Activated CD8-positive, alpha-beta memory T cell treated with anti-CD3 and anti-CD28 coated beads, Interleukin-2, amount 10 ng/mL, durations not matched to agents 7 days and 5 days (primary cell): ENCODE measurements at regions of chr1 and their contacts with region 1.

Region 1: DNA sequence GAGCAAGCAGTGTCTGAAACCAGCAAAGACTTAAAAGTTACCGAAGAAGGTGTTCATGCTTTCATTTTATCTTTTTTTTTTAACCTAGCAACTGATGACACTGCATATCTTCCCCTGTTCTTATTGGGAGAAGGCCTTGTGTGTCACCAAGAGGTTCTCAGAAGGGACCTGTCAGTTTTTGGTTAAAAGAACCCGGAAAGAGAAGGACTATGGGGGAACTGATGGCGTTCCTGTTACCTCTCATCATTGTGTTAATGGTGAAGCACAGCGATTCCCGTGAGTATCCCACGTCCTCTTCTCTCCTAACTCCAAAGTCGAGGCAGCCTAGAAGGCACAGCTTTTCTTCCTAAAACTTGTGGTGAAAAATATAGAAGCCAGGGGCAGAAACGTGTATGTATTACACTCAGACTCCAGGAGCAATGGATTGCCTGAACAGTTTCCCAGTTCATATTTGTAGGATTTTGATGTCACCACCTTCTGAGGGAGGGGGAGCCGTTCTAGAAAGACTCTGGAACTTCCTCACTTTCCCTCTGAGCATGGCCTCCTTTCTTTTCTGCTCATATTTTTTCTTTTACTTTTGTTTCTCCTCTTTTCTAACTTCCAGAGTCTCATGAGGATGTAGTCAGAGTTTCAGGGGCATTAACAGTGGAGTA is at the start of gene MR1:
- DNase-seq: peak; percentile 60
- ATAC-seq: peak; percentile 98
- H3K4me3 Mint-ChIP-seq: peak within 1 kb of the TSS; percentile 92
- H3K27ac Mint-ChIP-seq: peak within 1 kb of the TSS; percentile 98
- H3K4me1 Mint-ChIP-seq: peaks cover 55% of the 10 kb centered on the region
- H3K27me3 Mint-ChIP-seq: no peaks in the 10 kb centered on the region
- total RNA-seq, gene MR1: 38.7 to 41.2 TPM

Region 2: GRCh38 chr1:180981596-180982387 is 52.1 kb before region 1 on chr1:
- CTCF ChIA-PET with region 1: no interaction called
- DNase-seq: peak; percentile 75
- ATAC-seq: peak; percentile 87
- H3K4me3 Mint-ChIP-seq: peak overlapping the region; percentile 10
- H3K27ac Mint-ChIP-seq: peak overlapping the region; percentile 65
- H3K4me1 Mint-ChIP-seq: peaks cover 19% of the 10 kb centered on the region
- H3K27me3 Mint-ChIP-seq: no peaks in the 10 kb centered on the region

Region 3: DNA sequence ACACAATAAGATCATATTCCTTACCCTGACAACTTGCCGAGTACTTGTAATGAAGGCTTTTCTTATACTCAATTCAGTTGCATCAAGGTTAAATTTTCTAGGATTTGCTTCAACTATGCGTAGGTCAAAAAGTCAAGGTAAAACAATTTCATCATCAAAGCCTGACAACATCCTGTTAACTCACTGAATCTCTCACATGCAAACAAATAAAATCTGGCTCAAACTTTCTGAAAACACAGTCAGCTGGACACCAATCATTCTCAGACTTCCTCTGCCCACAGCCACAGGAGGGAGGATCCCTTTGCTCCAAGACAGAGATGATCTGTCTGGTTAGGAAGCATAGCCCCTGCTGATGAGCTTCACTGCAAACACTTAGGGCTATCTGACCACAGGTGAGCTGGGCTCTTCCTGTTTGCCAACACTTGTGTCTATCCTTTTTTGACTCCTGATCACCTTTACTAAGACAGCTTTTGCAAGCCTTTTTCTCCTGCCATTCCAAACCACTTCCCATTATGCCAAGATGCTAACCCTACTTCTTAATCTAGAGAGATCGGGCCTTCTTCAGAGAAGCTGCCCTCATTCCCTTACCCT is 31.2 kb before region 1 on chr1:
- CTCF ChIA-PET with region 1: no interaction called
- DNase-seq: no peak
- ATAC-seq: no peak
- H3K4me3 Mint-ChIP-seq: no peak overlapping the region
- H3K27ac Mint-ChIP-seq: no peak overlapping the region
- H3K4me1 Mint-ChIP-seq: peaks cover 6% of the 10 kb centered on the region
- H3K27me3 Mint-ChIP-seq: no peaks in the 10 kb centered on the region

Region 4: DNA sequence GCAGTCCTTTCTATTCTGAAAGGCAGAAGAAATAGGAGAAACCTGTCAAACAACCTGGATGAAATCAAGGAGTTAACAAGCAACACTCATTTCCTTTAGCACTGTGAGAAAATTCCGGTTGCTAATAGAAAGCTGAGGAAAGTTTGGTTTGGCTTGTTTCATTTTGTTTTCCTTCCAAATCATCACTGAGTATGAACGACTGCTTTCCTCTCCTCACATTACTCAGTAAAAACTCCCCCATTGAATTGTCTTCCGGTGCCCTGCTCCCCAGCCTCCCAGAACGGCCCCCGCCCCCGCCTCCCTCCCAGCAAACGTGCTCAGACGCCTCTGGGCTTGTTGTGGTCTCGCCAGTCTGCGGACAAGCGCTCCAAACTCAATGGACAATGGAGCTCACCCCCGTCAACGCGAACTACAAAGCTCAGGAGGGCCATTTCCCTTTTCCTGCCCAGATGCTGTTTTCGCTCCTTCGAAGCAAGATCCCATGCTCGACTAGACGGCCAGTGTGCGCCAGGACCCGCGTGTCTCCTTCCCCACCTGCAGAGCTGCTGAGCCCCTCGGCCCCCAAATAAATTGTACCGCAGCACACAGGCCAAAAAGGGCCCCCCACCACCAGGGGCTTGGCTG is 12.0 kb before region 1 on chr1:
- CTCF ChIA-PET with region 1: interaction called, 12 read pairs
- DNase-seq: peak; percentile 80
- ATAC-seq: peak; percentile 48
- H3K4me3 Mint-ChIP-seq: peak overlapping the region; percentile 94
- H3K27ac Mint-ChIP-seq: peak overlapping the region; percentile 90
- H3K4me1 Mint-ChIP-seq: peaks cover 39% of the 10 kb centered on the region
- H3K27me3 Mint-ChIP-seq: peaks cover 7% of the 10 kb centered on the region

Region 5: DNA sequence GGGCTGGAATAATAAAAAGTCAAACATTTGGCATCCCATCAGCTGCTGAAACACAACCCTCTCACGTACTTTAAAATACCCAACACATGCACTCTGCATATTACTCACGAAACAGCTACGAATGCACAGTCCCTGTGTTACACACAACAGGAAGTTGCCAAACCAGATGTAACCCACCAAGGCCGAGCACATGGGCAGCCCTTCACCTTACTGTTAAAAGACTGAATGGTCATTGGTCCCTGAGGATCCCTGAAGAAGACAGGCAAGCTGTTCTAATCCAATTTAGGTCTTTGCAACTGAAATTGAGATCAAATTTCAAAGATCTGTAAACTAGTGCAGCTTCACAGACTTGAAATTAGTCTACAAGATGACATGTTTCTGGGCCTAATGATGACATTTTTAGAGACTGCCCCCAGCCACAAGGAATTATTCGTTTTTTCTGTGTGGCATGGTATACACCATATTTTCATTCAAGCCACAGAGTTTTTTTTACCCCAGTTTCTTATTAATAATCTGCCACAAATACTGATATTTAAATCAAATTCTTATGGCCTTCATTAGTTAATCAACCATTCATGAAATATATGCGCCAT is 29.0 kb after region 1 on chr1:
- CTCF ChIA-PET with region 1: interaction called, 15 read pairs
- DNase-seq: peak; percentile 83
- ATAC-seq: peak; percentile 97
- H3K4me3 Mint-ChIP-seq: peak overlapping the region; percentile 60
- H3K27ac Mint-ChIP-seq: peak overlapping the region; percentile 82
- H3K4me1 Mint-ChIP-seq: peaks cover 22% of the 10 kb centered on the region
- H3K27me3 Mint-ChIP-seq: no peaks in the 10 kb centered on the region

Region 6: DNA sequence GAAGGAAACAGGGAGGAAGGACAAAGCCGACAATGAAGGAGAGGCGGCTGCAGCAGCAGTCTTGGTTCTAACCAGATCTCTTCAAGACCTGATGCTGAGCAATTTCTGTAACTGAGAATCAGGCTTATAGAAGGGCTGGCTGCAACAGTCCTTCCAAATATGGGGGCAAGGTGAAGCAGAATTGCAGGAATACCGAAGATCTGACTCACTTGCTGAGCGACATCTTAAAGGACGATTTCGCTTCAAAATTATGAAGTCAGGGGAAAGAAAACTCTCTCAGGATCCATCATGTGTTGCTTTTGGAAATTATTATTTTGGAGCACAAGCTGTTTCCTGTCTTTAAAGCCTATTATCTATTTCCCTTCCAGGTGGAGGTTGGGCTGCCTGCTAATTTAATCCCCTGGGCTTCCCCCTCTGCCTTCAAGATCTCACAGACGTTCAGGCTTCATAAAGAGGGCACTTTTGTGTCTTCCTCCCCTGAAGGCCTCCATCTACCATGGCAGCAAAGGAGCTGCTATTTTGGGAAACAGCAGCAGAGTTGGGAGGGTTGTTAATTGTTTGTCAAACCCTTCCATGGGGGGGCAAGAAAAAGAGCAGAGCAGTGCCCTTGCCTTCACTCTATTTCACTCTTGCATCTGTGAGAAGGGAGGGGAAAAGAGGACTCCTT is 43.8 kb after region 1 on chr1:
- CTCF ChIA-PET with region 1: interaction called, 13 read pairs
- DNase-seq: no peak
- ATAC-seq: no peak
- H3K4me3 Mint-ChIP-seq: no peak overlapping the region
- H3K27ac Mint-ChIP-seq: no peak overlapping the region
- H3K4me1 Mint-ChIP-seq: peaks cover 40% of the 10 kb centered on the region
- H3K27me3 Mint-ChIP-seq: peaks cover 28% of the 10 kb centered on the region

Region 7: DNA sequence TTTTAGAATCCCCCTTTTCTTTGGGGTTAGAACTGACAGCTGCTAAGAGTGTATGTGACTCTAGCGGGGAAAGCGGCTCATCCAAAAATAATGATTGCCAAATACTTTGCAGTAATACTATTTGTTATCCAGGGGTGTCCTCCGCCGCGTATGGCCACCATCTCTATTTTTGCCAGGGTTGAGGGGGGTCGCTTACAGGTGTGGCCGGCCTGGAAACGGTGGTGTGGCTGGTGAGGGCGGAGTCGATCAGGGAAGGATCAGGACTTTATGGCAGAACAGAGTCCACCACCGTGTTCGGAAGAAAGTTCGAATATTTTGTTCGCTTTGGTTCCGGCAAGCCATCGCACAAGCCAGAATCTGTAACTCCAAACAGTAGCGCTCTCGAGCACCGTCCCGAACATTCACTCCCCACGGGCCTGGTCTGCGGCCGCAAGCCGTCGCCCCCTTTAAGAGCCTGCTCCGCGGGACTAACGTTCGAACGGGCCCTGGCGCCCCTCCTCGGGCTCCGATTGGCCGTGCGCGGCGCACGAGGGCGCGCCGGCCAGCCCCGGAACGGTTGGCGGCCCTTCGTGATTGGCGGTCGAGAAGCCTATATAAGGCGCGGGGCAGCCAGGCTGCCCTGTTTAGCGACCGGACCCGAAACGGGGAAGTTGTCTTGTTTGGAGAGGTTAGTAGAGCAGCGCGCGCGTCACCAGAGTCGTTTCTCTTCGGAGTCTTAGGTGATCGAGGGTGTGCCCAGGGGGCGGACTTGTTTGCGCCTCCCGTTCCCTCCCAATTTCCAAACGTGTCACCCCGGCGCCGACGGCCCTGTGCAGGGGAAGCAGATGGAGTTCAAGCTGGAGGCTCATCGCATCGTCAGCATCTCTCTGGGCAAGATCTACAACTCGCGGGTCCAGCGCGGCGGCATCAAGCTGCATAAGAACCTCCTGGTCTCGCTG is 54.4 kb after region 1 on chr1 and contains the start of gene IER5:
- CTCF ChIA-PET with region 1: interaction called, 14 read pairs
- DNase-seq: peak; percentile 97
- ATAC-seq: peak; percentile 81
- H3K4me3 Mint-ChIP-seq: peak within 1 kb of the TSS; percentile 96
- H3K27ac Mint-ChIP-seq: peak within 1 kb of the TSS; percentile 97
- H3K4me1 Mint-ChIP-seq: peaks cover 47% of the 10 kb centered on the region
- H3K27me3 Mint-ChIP-seq: no peaks in the 10 kb centered on the region
- total RNA-seq, gene IER5: 50.4 to 67.0 TPM

Region 8: DNA sequence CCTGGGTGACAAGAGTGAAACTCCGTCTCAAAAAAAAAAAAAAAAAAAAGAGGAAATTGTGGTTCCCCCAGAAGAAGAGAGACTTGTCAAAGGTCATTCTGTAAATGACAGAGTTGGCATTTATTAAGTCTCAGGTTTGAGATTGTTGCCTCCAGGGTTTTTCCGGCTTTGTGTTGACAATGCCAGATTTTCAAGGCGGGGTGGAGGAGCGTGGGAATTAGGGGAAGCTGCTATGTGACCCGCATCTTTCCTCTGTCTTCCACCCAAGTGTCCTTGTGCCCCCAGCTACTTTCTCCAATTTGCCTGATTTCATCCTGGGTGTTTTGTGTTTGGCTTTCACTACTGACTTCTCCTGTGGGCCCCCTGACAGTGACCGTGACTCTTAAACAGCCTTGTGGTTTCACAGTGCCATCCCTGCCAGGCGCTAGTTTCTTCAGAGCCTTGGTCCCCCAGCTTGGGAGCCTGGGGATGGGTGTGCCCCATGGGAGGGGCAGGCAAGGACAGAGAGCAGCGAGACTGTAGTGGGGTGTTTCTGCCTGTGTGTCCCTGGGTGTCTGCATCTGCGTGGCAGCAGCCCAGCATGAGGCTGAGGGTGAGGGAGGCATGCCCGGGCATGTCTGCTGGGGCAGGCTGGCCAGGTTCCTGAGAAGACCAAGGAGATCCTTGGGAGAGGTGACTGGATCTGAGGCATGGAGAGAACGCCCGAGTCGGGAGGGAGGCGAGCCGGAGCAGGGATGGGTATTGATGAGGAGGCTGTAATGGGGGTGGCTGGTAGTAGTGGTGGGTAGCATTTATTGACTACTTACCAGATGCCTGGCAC is 100.8 kb after region 1 on chr1:
- CTCF ChIA-PET with region 1: interaction called, 18 read pairs
- DNase-seq: peak; percentile 63
- ATAC-seq: peak; percentile 62
- H3K4me3 Mint-ChIP-seq: peak overlapping the region; percentile 44
- H3K27ac Mint-ChIP-seq: peak overlapping the region; percentile 90
- H3K4me1 Mint-ChIP-seq: peaks cover 71% of the 10 kb centered on the region
- H3K27me3 Mint-ChIP-seq: no peaks in the 10 kb centered on the region